Activated naive CD4-positive, alpha-beta T cell treated with anti-CD3 and anti-CD28 coated beads for 36 hours (primary cell): ENCODE measurements at regions of chr20 and their contacts with region 1.

Region 1: DNA sequence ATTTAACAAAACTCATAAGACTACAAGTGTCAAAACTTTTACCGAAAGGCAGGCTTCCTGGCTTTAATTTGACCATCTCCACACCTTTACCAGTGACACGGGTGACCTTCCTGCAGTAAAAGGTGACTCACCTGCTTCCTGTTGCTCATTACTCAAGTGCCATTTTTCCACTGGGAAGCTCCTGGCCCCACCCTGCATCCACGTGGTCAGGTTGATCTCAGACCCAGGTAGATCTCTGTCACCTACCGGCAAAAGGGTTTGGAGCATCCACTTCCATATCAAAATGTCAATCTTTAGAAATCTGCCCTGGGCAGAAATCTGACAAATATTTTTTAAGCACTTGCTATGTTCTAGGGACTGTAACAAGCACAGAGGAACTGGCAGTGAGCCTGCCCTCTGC is 31.9 kb upstream of the CDH4 start:
- DNase-seq: no peak
- H3K4me3 Mint-ChIP-seq: no peak overlapping the region
- H3K27ac Mint-ChIP-seq: no peak overlapping the region
- H3K4me1 Mint-ChIP-seq: no peaks in the 10 kb centered on the region
- H3K27me3 Mint-ChIP-seq: peaks cover 15% of the 10 kb centered on the region

Region 2: DNA sequence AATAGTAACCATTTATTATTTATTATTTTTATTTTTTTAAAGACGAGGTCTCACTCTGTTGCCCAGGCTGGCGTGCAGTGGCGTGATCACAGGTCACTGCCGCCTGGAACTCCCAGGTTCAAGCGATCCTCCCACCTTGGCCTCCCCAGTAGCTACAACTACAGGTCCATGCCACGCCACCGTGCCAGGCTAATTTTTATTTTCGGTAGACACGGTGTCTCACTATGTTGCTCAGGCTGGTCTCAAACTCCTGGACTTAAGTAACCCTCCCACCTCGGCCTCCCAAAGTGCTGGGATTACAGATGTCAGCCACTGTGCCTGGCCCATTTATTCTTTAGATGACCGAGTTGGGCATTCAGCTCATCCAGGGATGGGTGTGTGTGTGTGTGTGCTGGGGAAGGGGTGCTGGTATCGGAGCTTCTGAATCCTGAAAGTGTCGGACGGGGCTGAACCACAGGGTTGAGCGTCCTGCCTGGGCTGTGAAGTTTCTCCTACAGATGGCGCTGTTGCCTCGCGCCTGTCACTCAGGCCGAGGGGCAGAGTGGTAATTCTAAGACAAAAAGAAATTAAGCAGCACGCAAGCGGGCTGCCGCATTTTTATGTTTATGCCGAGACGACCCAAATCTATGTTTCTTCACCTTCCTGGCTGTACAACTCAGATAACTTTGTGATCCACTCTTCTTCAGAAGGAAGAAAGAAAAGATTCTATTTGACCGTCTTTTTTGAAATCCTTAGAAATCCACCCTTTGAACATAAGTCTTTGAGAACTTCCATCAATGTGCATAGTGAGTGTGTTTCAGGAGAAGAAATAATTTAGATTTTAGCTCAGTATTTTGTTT is 1009.2 kb before region 1 on chr20:
- CTCF ChIA-PET with region 1: no interaction called
- intact Hi-C with region 1: loop called (anchors 5 kb)
- DNase-seq: peak; percentile 71
- H3K4me3 Mint-ChIP-seq: no peak overlapping the region
- H3K27ac Mint-ChIP-seq: no peak overlapping the region
- H3K4me1 Mint-ChIP-seq: peaks cover 3% of the 10 kb centered on the region
- H3K27me3 Mint-ChIP-seq: peaks cover 2% of the 10 kb centered on the region

Region 3: GRCh38 chr20:60851826-60852704 is 368.1 kb before region 1 on chr20:
- CTCF ChIA-PET with region 1: no interaction called
- intact Hi-C with region 1: loop called (anchors 5 kb)
- DNase-seq: peak; percentile 6
- H3K4me3 Mint-ChIP-seq: no peak overlapping the region
- H3K27ac Mint-ChIP-seq: no peak overlapping the region
- H3K4me1 Mint-ChIP-seq: no peaks in the 10 kb centered on the region
- H3K27me3 Mint-ChIP-seq: no peaks in the 10 kb centered on the region